ENCODE measurements at regions of chr18 and their contacts with region 1.

Region 1: DNA sequence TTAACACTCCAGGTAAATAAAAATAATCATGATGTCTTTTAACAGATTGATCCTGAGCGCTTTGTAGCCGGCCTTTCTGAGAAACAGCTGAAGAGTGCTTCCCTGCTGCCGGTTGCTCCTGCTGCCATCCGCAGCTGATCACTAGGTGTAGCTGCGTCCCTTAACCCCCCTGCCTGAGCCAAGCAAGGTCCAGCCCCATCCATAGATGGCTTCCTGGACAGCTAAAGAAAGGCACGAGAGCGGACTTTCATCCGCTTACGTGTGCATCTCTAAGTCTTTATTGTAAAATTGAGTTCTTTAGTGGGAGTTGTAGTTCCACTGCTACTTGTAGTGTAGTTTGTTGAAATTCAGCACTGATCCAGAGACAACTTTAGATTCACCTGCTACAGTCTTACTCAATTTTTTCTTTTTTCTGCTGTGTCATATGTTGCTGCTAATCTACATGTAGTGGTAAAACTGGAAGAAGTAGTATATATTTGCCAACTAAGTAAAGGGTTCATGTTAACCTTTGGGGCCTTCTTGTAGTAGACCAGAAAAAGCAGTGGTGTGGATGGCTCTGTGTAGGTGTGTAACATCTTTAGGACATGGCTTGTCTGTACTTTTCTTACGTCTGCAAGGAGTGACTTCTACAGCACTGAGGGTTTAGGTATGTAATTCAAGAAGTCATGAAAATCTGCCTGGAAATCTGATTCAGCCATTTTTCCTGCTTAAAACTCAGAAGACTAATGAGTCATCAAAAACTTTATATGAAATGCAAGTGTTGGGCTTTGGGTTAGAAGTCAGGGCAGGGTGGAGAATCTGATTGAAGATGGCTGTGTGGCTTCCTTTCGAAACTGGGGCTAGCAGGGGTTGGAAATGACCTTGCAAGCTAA is 8.3 kb downstream of the PTPRM start:
- DNase-seq: no peak
- ATAC-seq: no peak
- H3K4me3 ChIP-seq: no peak overlapping the region
- H3K27ac ChIP-seq: no peak overlapping the region
- H3K4me1 ChIP-seq: peaks cover 0 to 3% of the 10 kb centered on the region in 2 donors
- H3K27me3 ChIP-seq: no peaks in the 10 kb centered on the region

Region 2: DNA sequence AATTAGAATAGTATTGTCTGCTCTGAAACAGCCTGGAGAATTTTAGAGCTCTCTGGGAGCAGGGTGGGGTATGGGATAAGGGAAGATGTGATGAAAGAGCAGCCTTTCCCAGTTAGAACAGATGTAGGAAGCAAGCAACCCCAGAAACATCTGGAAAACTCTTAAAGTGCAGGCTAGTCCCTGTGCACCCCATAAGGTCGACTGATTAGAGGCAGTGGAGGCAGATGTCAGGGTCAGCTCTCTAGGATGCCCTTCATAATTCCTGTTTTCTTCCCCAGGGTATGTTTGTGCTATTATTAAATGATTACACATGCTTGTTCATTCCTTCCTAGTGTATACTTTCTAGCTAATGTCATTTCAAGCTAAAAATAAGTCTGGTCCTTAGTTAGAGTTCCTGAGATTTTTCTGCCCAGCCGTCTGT is 33.4 kb after region 1 on chr18:
- intact Hi-C with region 1: loop called in 1 of 2 experiments (anchors 5 kb)
- DNase-seq: no peak
- ATAC-seq: peak; percentile 68
- H3K4me3 ChIP-seq: no peak overlapping the region
- H3K27ac ChIP-seq: peak overlapping the region; percentile 47 to 96
- H3K4me1 ChIP-seq: peaks cover 2 to 17% of the 10 kb centered on the region in 2 donors
- H3K27me3 ChIP-seq: no peaks in the 10 kb centered on the region

Region 3: GRCh38 chr18:7617738-7618422 is 42.5 kb after region 1 on chr18:
- intact Hi-C with region 1: loop called in 1 of 2 experiments (anchors 5 kb)
- DNase-seq: no peak
- ATAC-seq: peak; percentile 61
- H3K4me3 ChIP-seq: peak overlapping the region; percentile 30 to 58
- H3K27ac ChIP-seq: peak overlapping the region; percentile 48 to 75
- H3K4me1 ChIP-seq: peaks cover 0 to 3% of the 10 kb centered on the region in 2 donors
- H3K27me3 ChIP-seq: no peaks in the 10 kb centered on the region

Region 4: GRCh38 chr18:7926526-7926925 is 351.1 kb after region 1 on chr18:
- intact Hi-C with region 1: no loop called
- DNase-seq: no peak
- ATAC-seq: no peak
- H3K4me3 ChIP-seq: no peak overlapping the region
- H3K27ac ChIP-seq: no peak overlapping the region
- H3K4me1 ChIP-seq: peaks cover 4 to 6% of the 10 kb centered on the region in 2 donors
- H3K27me3 ChIP-seq: no peaks in the 10 kb centered on the region

Measured in aorta (tissue), 5 donors.